ENCODE measurements at regions of chr9 and their contacts with region 1.

Region 1: GRCh38 chr9:4640027-4640426 is 22.1 kb upstream of the PLPP6 start:
- DNase-seq: peak in 3 of 7 donors; percentile 32 to 69 (median 33)
- H3K4me3 ChIP-seq: no peak overlapping the region
- H3K27ac ChIP-seq: no peak overlapping the region
- H3K4me1 ChIP-seq: no peaks in the 10 kb centered on the region
- H3K27me3 ChIP-seq: no peaks in the 10 kb centered on the region
- CTCF ChIP-seq: peak; percentile 17 to 52 (median 42)
- POLR2A ChIP-seq: no peak

Region 2: DNA sequence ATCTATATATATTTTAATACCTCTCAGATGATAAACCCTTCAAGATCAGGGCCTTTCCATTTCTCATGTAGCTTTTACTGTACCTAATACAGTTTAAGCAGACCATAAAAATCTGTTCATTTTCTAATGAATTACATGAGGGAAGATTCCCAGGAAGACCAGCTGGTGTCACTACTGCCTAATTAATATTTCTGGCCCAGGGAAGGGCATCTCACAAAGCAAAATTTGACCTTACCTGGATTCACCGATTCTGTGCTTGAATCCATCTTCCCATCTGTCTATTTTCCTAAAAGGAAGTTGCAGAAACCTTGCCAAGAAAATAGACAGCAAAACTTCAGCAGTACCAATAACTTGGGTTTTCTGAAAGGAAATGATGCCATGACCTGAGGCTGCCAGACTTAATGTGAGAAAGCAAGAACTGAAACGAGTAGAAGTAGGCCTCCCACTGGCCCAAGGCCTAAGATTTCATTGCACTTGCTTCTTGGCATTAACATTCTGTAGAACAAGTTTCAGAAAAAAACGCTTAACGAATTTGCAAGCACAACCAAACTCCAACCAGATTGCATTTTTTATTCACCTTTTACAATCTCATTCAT is 257.2 kb before region 1 on chr9:
- intact Hi-C with region 1: loop called in 1 of 2 experiments (anchors 5 kb)
- DNase-seq: peak in 1 of 7 donors; percentile 7
- H3K4me3 ChIP-seq: no peak overlapping the region
- H3K27ac ChIP-seq: no peak overlapping the region
- H3K4me1 ChIP-seq: no peaks in the 10 kb centered on the region
- H3K27me3 ChIP-seq: no peaks in the 10 kb centered on the region
- CTCF ChIP-seq: peak; percentile 17 to 62 (median 60)
- POLR2A ChIP-seq: no peak